ENCODE measurements at regions of chr1 and their contacts with region 1.

Region 1: DNA sequence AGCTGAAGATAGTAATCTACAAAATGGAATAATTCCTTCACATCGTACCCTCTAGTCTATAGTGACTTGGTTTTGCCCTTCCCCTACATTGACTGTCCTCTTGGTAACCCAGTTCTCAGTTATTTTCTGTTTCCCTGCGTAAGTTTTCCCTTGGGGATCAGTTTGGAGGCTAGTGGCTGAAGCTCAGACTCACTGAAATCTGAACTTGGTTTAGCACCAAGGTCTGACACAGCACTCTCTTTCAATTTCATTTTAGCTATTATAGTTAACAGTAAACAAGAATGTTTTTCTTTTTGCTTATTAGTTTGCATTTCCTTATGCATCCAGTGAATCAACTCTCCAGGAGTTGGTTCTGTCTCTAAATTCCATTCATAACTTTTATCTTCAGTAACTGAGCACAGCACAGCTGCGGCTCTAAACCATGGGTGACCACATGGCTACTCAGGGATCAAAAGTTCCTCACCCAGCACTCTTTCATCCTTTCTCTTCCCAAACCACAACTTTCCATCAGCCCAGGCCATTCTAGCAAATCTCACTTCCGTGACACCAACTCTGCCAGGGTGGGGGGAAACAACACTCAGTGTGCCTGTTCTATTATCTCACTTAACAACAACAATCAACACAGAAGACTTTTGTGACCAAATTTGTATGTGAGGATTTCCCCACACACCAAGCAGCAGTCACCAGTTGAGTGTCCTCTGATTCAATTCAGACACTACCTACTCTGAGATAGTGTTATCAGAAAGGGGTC is 17.6 kb upstream of the IFI6 start:
- DNase-seq: no peak
- ATAC-seq: no peak
- H3K4me3 ChIP-seq: no peak overlapping the region
- H3K27ac ChIP-seq: no peak overlapping the region
- H3K4me1 ChIP-seq: no peaks in the 10 kb centered on the region
- H3K27me3 ChIP-seq: no peaks in the 10 kb centered on the region

Region 2: DNA sequence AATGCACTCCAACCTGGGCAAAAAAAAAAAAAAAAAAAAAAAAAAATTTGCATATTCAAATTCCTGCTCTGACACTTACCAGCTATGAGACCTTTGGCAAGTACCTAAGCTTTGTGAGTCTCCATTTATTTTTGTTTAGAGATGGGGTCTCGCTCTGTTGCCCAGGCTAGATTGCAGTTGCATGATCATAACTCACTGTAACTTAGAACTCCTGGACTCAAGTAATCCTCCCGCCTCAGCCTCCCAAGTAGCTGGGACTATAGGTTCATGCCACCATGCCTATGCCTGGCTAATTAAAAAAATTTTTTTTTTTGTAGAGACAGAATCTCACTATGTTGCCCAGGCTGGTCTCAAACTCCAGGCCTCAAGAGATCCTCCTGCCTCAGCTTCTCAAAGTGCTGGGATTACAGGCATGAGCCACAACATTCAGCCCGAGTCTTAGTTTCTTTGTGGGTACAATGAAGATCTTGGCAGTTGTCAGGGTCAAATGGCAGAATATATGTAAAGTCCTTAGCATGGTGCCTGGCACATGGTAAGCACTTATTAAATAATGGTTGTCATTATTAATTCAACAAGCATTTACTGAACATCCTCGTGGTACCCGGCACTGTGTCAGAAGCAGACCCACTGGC is 623.5 kb before region 1 on chr1:
- intact Hi-C with region 1: loop called in 1 of 2 experiments (anchors 5 kb)
- DNase-seq: no peak
- ATAC-seq: no peak
- H3K4me3 ChIP-seq: no peak overlapping the region
- H3K27ac ChIP-seq: no peak overlapping the region
- H3K4me1 ChIP-seq: no peaks in the 10 kb centered on the region
- H3K27me3 ChIP-seq: no peaks in the 10 kb centered on the region

Region 3: DNA sequence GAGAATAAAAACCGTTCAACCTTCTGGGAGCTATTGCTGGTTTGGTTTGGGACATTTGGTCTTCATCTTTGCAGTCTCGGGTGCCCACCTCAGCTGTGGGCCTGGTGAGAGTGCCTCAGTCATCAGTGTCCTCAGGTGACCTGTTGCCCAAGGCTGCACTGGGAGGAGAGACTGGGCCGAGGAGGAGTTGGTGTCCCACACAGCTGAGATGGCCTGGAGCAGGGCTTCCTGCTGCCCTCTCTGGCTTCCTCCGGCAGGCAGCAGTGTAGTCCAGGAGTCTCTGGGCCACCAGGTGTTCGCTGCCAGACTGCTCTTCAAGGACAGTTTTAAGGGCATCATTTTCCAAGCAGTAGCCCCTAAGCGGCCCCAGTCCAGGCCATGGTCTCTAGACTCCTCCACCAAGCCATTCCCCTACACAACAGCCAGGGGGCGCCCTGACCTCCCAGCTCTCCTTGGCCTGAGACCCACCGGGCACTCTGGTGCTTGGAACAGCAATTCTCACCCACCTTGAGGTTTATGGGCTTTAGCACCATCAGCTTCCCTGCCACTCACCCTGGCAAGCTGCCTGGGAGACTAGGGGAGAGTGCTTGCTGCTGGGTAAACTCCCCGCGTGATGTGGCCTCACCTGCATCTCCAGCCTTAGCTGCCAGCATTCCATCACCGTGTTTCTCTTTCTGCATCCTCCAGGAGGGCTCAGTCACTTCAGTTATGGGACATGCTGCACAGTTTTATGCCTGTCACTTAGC is 356.9 kb before region 1 on chr1:
- intact Hi-C with region 1: no loop called
- DNase-seq: peak in 1 of 2 donors; percentile 83
- ATAC-seq: peak; percentile 77
- H3K4me3 ChIP-seq: no peak overlapping the region
- H3K27ac ChIP-seq: no peak overlapping the region
- H3K4me1 ChIP-seq: no peaks in the 10 kb centered on the region
- H3K27me3 ChIP-seq: no peaks in the 10 kb centered on the region

Region 4: DNA sequence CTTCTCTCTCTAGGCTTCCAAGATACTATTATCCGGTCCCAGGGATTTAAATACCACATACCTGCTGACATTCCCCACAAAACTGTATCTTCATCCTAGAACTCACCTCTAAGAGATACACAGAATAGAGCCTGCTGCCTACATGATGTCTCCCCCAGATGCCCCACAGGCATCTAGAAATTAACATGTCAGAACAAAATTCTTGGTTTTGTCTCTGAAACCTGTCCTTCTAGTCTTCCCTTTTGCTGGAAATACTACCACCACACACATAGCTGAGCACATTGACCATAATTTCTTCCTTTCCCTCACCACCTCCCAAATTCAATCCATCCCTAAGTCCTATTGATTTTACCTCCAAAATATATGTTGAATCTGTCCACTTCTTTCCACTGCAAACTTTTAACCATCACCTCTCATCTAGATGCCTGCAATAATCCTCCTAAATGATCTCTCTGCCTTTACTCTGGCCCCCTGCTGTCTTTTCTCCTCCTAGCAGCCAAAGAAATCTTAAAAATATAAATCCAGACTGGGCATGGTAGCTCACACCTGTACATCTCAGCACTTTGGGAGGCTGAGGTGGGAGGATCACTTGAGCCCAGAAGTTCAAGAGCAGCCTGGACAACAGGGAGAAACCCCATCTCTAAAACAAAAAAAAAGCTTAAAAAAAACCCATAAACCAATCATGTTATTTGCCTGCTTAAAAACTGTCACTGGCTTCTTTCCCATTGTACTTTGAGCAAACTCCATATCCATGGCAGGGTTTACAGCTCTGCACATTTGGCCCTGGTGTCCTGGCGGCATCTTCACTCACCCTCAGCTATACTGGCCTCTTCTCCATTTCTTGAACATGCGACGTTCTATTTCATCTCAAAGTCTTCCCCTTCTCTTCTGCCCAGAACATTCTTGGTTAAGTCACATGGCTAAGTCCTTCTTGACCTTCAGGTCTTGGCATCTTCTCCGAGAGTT is 30.0 kb after region 1 on chr1:
- intact Hi-C with region 1: no loop called
- DNase-seq: no peak
- ATAC-seq: no peak
- H3K4me3 ChIP-seq: no peak overlapping the region
- H3K27ac ChIP-seq: no peak overlapping the region
- H3K4me1 ChIP-seq: no peaks in the 10 kb centered on the region
- H3K27me3 ChIP-seq: peaks cover 0 to 2% of the 10 kb centered on the region in 2 donors